Cardiac septum (tissue), 1 donor: ENCODE measurements at regions of chr21 and their contacts with region 1.

Region 1: GRCh38 chr21:32364796-32365195 is 28.0 kb downstream of the URB1 start:
- DNase-seq: no peak

Region 2: DNA sequence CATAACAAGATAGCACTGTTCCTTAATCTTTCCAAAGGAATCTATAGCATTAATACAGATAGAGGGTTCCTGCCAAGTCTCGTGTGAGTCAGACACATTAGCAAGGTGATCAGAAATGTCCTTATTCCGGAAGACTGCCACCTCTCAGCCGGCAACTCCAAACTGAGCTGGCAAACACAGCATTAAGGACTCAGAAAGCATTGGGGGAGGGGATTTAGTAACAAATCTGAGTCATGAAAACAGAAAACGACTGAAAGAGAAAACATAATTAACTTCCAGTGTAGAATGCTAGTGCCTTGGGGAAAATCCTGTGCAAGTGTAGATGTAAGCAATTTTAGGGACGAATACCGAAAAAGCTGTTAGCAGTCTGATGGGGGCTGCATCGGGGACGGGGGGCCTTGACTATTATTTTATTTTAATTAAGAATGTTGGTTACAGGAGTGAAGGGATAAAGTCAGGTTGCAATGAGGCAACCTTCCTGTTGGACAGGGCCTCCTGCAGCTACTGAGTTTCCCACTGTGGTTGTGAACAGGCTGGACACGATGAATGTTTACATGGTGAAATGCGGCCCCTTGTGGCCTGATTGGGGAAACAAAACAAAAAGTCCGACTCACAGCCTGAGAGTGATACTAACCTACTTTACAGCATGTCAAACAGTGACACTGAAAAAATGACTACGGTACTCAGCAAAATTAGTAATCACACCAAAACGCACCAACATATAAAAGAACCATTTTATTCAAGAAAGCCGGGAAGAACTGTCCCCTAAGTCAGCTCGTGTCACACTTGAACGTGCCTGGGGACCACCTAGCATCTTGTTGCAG is 106.6 kb before region 1 on chr21:
- intact Hi-C with region 1: no loop called
- DNase-seq: no peak

Region 3: GRCh38 chr21:32334980-32335531 is 29.7 kb before region 1 on chr21:
- intact Hi-C with region 1: loop called (anchors 5 kb)
- DNase-seq: peak; percentile 66

Region 4: DNA sequence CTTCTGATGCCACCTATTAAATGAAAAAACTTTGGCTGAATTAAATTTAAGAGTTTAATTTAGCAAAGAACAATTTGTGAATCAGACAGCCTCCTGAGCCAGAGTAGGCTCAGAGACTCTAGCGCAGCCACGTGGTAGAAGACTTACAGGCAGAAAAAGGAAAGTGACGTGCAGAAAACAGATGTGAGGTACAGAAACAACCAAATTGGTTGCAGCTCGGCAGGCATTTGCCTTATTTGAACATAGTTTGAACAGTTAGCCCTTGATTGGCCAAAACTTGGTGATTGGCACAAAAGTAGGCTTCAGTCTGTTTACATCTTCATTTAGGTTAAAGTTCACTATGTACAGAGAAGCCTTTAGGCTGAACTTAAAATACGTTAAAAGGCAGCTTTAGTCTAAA is 197.6 kb after region 1 on chr21:
- intact Hi-C with region 1: no loop called
- DNase-seq: no peak

Region 5: DNA sequence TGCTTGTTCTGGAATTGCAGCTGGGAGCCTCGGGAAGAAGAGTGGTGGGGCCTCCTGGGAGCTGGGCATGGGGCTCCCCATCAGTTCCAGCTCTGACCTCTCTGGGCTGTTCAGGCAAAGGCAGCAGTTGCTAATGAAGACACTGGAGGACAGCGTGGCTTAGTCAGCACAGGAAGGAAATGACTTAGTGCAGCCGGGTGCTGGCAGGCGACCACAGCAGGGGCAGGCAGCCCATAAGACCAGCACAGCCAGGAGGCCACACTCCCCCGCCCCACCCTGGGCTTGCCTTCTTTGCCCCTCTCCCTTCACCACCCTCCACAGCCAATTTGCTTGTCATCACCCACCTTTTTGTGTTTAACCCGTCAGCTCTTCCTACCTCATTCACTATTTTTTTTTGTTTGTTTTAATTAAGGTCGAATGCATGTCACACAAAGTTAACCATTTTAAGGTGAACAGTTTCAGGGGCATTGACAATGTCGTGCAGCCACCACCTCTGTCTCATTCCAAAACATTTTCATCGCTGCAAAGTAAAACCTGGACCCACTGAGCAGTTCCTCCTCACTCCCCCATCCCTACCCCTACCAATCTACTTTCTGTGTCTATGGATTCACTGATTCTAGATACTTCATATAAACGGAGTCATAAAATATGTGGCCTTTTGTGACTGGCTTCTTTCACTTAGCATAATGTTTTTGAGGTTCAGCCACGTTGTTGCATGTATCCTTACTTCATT is 671.8 kb after region 1 on chr21:
- intact Hi-C with region 1: no loop called
- DNase-seq: peak; percentile 90